MCF 10A (cell line): ENCODE measurements at regions of chr18 and their contacts with region 1.

Region 1: GRCh38 chr18:59402432-59403090 is 43.5 kb upstream of the LMAN1 start:
- DNase-seq: peak; percentile 87
- H3K4me3 Mint-ChIP-seq: no peak overlapping the region
- H3K27ac Mint-ChIP-seq: no peak overlapping the region
- H3K4me1 Mint-ChIP-seq: no peaks in the 10 kb centered on the region
- H3K27me3 Mint-ChIP-seq: no peaks in the 10 kb centered on the region
- CTCF ChIP-seq: peak; percentile 98

Region 2: DNA sequence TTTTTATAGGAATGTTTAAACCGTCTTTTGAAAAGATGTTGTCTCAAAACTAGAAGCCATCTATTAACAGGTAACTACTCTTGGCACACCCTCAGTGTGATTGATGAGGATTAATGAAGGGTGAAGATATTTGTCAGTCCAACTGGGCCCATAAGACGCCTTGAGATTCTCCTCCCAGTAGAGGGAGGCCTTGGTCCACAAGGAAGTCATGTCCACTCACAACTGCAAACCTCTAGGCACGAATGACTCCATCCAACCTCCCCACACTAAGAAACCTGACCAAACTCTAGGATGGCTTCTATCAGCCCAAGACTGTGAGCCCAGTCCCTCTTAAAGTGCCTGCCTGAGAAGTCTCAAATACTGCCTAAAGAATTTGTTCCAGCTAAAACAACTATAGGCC is 201.8 kb before region 1 on chr18:
- CTCF ChIA-PET with region 1: interaction called, 11 read pairs
- POLR2A ChIA-PET with region 1: no interaction called
- intact Hi-C with region 1: no loop called
- DNase-seq: peak; percentile 18
- H3K4me3 Mint-ChIP-seq: no peak overlapping the region
- H3K27ac Mint-ChIP-seq: no peak overlapping the region
- H3K4me1 Mint-ChIP-seq: peaks cover 11% of the 10 kb centered on the region
- H3K27me3 Mint-ChIP-seq: peaks cover 32% of the 10 kb centered on the region
- CTCF ChIP-seq: no peak

Region 3: GRCh38 chr18:59276047-59276446 is 126.5 kb before region 1 on chr18:
- CTCF ChIA-PET with region 1: interaction called, 13 read pairs
- POLR2A ChIA-PET with region 1: no interaction called
- intact Hi-C with region 1: no loop called
- DNase-seq: no peak
- H3K4me3 Mint-ChIP-seq: no peak overlapping the region
- H3K27ac Mint-ChIP-seq: no peak overlapping the region
- H3K4me1 Mint-ChIP-seq: no peaks in the 10 kb centered on the region
- H3K27me3 Mint-ChIP-seq: peaks cover 22% of the 10 kb centered on the region
- CTCF ChIP-seq: no peak

Region 4: GRCh38 chr18:59318460-59319050 is 84.0 kb before region 1 on chr18 and contains the start of gene CPLX4:
- CTCF ChIA-PET with region 1: interaction called, 12 read pairs
- POLR2A ChIA-PET with region 1: no interaction called
- intact Hi-C with region 1: no loop called
- DNase-seq: no peak
- H3K4me3 Mint-ChIP-seq: no peak within 1 kb of the TSS
- H3K27ac Mint-ChIP-seq: no peak within 1 kb of the TSS
- H3K4me1 Mint-ChIP-seq: no peaks in the 10 kb centered on the region
- H3K27me3 Mint-ChIP-seq: peaks cover 12% of the 10 kb centered on the region
- CTCF ChIP-seq: no peak
- total RNA-seq, gene CPLX4: not detected in 2 replicates

Region 5: GRCh38 chr18:59340817-59341216 is 61.7 kb before region 1 on chr18:
- CTCF ChIA-PET with region 1: no interaction called
- POLR2A ChIA-PET with region 1: no interaction called
- intact Hi-C with region 1: no loop called
- DNase-seq: no peak
- H3K4me3 Mint-ChIP-seq: no peak overlapping the region
- H3K27ac Mint-ChIP-seq: peak overlapping the region; percentile 20
- H3K4me1 Mint-ChIP-seq: peaks cover 6% of the 10 kb centered on the region
- H3K27me3 Mint-ChIP-seq: no peaks in the 10 kb centered on the region
- CTCF ChIP-seq: no peak

Region 6: GRCh38 chr18:59358712-59359575 is 43.6 kb before region 1 on chr18 and contains the start of gene LMAN1:
- CTCF ChIA-PET with region 1: interaction called, 16 read pairs
- POLR2A ChIA-PET with region 1: interaction called, 10 read pairs
- intact Hi-C with region 1: no loop called
- DNase-seq: peak; percentile 92
- H3K4me3 Mint-ChIP-seq: peak within 1 kb of the TSS; percentile 81
- H3K27ac Mint-ChIP-seq: peak within 1 kb of the TSS; percentile 92
- H3K4me1 Mint-ChIP-seq: peaks cover 11% of the 10 kb centered on the region
- H3K27me3 Mint-ChIP-seq: peaks cover 7% of the 10 kb centered on the region
- CTCF ChIP-seq: no peak
- total RNA-seq, gene LMAN1: 168 and 227 TPM in 2 replicates

Region 7: DNA sequence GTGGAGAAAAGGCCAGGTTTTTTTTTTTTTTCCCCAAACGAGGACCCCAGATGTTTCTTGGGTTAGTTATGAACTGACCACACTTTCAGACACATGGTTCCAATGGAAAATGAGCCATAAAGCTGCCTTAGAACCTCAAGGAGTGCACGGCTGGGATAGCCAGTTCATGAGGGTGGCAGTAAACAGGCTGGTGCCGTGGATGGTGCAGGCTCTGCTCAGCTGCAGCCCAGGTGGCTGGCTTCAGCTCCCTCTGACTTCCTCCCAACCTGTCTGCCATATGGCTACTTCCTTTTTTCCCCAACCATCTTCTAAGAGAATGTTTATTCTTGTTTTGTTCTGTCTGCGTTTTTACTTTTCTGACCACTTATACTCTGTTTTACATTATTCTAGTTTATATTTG is 66.3 kb after region 1 on chr18:
- CTCF ChIA-PET with region 1: no interaction called
- POLR2A ChIA-PET with region 1: no interaction called
- intact Hi-C with region 1: no loop called
- DNase-seq: no peak
- H3K4me3 Mint-ChIP-seq: no peak overlapping the region
- H3K27ac Mint-ChIP-seq: no peak overlapping the region
- H3K4me1 Mint-ChIP-seq: no peaks in the 10 kb centered on the region
- H3K27me3 Mint-ChIP-seq: no peaks in the 10 kb centered on the region
- CTCF ChIP-seq: no peak